Transverse colon (tissue), 4 donors: ENCODE measurements at regions of chr19 and their contacts with region 1.

Region 1: GRCh38 chr19:47243776-47244547 is 12.4 kb upstream of the CCDC9 start:
- DNase-seq: peak; percentile 92
- H3K4me3 ChIP-seq: peak overlapping the region; percentile 15 to 30 (median 18)
- H3K27ac ChIP-seq: peak overlapping the region; percentile 58 to 80 (median 74)
- H3K4me1 ChIP-seq: peaks cover 8 to 45% (median 38%) of the 10 kb centered on the region in 4 donors
- H3K27me3 ChIP-seq: peaks cover 20% of the 10 kb centered on the region
- CTCF ChIP-seq: peak; percentile 97 to 99 (median 99)
- EP300 ChIP-seq: no peak
- POLR2A ChIP-seq: peak; percentile 39

Region 2: GRCh38 chr19:47143322-47144073 is 100.5 kb before region 1 on chr19:
- in situ Hi-C with region 1: loop called in 2 of 4 experiments (anchors 5 to 10 kb)
- intact Hi-C with region 1: loop called (anchors 5 kb)
- DNase-seq: peak; percentile 9
- H3K4me3 ChIP-seq: no peak overlapping the region
- H3K27ac ChIP-seq: peak overlapping the region; percentile 54 to 70 (median 64)
- H3K4me1 ChIP-seq: peaks cover 0 to 23% (median 6%) of the 10 kb centered on the region in 4 donors
- H3K27me3 ChIP-seq: no peaks in the 10 kb centered on the region
- CTCF ChIP-seq: no peak
- EP300 ChIP-seq: no peak
- POLR2A ChIP-seq: no peak

Region 3: DNA sequence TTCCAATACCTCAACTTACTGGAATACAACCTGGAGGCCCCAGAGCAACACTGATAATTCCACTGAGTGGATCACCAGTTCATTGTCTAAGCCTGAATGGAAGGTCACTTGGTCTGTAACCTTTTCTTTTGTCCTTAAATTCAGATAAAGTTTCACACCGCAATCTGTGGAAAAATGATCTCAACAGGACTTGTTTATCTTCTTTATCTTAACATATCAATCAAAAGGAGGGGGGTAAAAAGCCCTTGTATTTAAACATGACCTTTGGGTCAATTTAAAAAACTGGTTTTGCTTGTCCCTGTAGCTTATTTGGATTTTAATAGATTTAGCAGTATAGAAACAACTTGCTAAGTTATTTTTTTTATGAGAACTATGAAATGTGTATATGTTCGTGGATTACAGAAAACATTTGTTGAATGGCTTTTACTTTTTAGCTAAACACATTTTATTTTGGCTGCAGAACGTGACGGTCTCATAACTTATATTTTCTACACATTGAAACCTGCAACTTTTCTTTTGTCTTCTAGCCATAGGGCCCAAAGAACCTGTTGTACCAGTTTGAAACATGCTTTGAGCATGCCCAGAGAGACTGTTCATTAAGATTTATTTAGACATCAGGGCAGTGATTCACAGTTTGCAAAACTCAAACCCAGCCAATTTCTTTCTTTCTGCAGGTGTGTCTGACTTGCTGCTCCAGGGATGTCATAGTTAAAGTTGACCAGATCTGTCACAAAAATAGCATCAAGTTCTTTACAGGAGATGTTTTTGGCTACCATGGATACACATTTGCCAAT is 91.5 kb before region 1 on chr19:
- in situ Hi-C with region 1: loop called (anchors 5 to 10 kb)
- intact Hi-C with region 1: loop called (anchors 5 kb)
- DNase-seq: no peak
- H3K4me3 ChIP-seq: no peak overlapping the region
- H3K27ac ChIP-seq: peak overlapping the region; percentile 58 to 93 (median 79)
- H3K4me1 ChIP-seq: peaks cover 19 to 70% (median 51%) of the 10 kb centered on the region in 4 donors
- H3K27me3 ChIP-seq: no peaks in the 10 kb centered on the region
- CTCF ChIP-seq: no peak
- EP300 ChIP-seq: no peak
- POLR2A ChIP-seq: no peak

Region 4: GRCh38 chr19:47157431-47158321 is 86.3 kb before region 1 on chr19:
- in situ Hi-C with region 1: loop called in 2 of 4 experiments (anchors 5 to 10 kb)
- intact Hi-C with region 1: no loop called
- DNase-seq: peak; percentile 64
- H3K4me3 ChIP-seq: peak overlapping the region in 1 of 4 donors; percentile 27
- H3K27ac ChIP-seq: peak overlapping the region; percentile 88 to 93 (median 88)
- H3K4me1 ChIP-seq: peaks cover 34 to 67% (median 59%) of the 10 kb centered on the region in 4 donors
- H3K27me3 ChIP-seq: no peaks in the 10 kb centered on the region
- CTCF ChIP-seq: peak in 3 of 5 experiments; percentile 3 to 57 (median 51)
- EP300 ChIP-seq: no peak
- POLR2A ChIP-seq: no peak

Region 5: DNA sequence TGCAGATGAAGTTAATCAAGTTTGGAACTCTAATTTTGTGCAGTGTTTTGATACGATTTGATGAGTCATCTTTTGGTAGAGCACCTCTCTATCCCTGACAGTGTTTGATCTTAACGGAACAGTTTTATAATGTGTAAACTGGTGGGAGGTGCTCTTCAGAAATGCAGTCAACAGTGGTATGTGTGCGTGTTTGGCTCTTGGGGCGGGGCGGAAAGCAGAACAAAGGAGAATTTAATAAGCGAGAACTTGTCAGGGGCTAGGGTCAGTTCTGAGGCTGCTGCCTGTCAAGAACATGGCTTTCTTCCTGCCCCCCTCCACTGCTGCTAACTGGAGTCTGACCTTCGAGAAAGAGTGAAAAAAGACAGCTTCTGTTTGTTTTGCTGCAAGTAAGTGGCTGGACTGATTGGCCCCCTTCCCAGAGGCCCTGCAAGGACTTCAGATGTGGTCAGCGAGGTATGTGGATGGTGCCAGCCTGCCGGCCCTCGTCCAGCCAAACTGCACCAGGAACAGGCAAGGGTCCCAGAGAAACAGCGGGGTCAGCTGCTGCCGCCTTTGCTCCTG is 53.7 kb before region 1 on chr19:
- in situ Hi-C with region 1: no loop called
- intact Hi-C with region 1: no loop called
- DNase-seq: peak; percentile 79
- H3K4me3 ChIP-seq: peak overlapping the region in 1 of 4 donors; percentile 34
- H3K27ac ChIP-seq: peak overlapping the region; percentile 87 to 92 (median 88)
- H3K4me1 ChIP-seq: peaks cover 35 to 59% (median 55%) of the 10 kb centered on the region in 4 donors
- H3K27me3 ChIP-seq: no peaks in the 10 kb centered on the region
- CTCF ChIP-seq: no peak
- EP300 ChIP-seq: no peak
- POLR2A ChIP-seq: peak; percentile 60

Region 6: GRCh38 chr19:47209319-47210179 is 34.4 kb before region 1 on chr19:
- in situ Hi-C with region 1: loop called in 1 of 4 experiments (anchors 5 kb)
- intact Hi-C with region 1: loop called (anchors 2 kb)
- DNase-seq: no peak
- H3K4me3 ChIP-seq: no peak overlapping the region
- H3K27ac ChIP-seq: peak overlapping the region; percentile 70 to 74 (median 73)
- H3K4me1 ChIP-seq: peaks cover 7 to 10% (median 9%) of the 10 kb centered on the region in 4 donors
- H3K27me3 ChIP-seq: no peaks in the 10 kb centered on the region
- CTCF ChIP-seq: no peak
- EP300 ChIP-seq: no peak
- POLR2A ChIP-seq: no peak

Region 7: GRCh38 chr19:47330466-47330869 is 86.5 kb after region 1 on chr19:
- in situ Hi-C with region 1: no loop called
- intact Hi-C with region 1: no loop called
- DNase-seq: no peak
- H3K4me3 ChIP-seq: no peak overlapping the region
- H3K27ac ChIP-seq: peak overlapping the region; percentile 37 to 74 (median 43)
- H3K4me1 ChIP-seq: no peaks in the 10 kb centered on the region
- H3K27me3 ChIP-seq: no peaks in the 10 kb centered on the region
- CTCF ChIP-seq: no peak
- EP300 ChIP-seq: no peak
- POLR2A ChIP-seq: peak; percentile 27